HepG2 (cell line): ENCODE measurements at regions of chr20 and their contacts with region 1.

Region 1: DNA sequence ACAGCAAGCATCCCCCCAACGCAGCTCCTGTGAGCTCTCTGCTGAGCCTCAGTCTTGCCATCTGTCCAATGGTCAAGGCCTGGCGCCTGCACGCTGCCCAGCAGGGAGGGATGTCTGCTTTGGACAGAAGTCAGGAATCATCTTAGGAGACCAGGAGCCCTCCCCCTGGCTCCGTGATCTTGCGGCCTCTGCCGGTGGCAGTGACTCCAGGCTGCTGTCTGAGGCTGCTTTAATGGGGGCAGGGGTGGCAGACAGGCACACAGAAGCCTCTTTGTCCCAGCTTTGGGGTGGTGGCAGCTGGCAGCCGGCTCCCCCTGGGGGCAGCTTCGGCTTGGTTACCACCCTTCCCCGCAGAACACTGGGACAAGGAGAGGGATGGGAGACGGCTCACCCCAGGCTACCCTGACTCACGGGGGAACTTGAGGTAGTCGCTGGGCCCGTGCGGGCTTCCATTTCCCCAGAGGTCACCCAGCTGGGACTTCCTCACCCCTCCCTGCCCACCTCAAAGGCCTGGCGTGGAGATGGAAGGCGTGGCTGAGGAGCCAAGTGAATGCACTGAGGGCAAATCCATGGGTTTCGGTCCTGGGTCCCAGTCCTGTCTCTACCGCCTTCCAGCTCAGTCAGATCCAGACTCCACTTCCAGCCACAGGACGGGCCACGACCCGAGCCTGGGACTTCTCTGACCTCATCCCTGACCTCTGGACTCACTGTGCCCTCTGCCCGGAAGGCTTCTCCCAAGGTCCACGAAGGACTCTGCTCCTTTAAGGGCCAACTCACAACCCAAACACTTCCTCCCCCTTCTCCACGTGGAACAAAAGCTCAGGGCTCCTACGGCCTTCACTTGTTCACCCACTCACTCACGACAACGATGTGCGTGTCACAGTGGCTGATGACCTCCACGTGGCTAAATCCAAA is 14.8 kb downstream of the PEDS1 start:
- DNase-seq: peak; percentile 73
- ATAC-seq: peak; percentile 68
- H3K4me3 ChIP-seq: peak overlapping the region in 1 of 3 experiments; percentile 25; a peak in 1 of 6 replicates
- H3K27ac ChIP-seq: peak overlapping the region; percentile 33
- H3K4me1 ChIP-seq: peaks cover 40% of the 10 kb centered on the region
- H3K27me3 ChIP-seq: no peaks in the 10 kb centered on the region
- CTCF ChIP-seq: peak; percentile 64
- EP300 ChIP-seq: no peak
- POLR2A ChIP-seq: no peak
- RAD21 ChIP-seq: peak; percentile 66

Region 2: GRCh38 chr20:49078296-49078695 is 1060.4 kb before region 1 on chr20:
- CTCF ChIA-PET with region 1: no interaction called
- POLR2A ChIA-PET with region 1: no interaction called
- in situ Hi-C with region 1: no loop called
- intact Hi-C with region 1: no loop called
- DNase-seq: no peak
- ATAC-seq: no peak
- H3K4me3 ChIP-seq: no peak overlapping the region
- H3K27ac ChIP-seq: no peak overlapping the region
- H3K4me1 ChIP-seq: no peaks in the 10 kb centered on the region
- H3K27me3 ChIP-seq: no peaks in the 10 kb centered on the region
- CTCF ChIP-seq: no peak
- EP300 ChIP-seq: no peak
- POLR2A ChIP-seq: no peak
- RAD21 ChIP-seq: no peak

Region 3: DNA sequence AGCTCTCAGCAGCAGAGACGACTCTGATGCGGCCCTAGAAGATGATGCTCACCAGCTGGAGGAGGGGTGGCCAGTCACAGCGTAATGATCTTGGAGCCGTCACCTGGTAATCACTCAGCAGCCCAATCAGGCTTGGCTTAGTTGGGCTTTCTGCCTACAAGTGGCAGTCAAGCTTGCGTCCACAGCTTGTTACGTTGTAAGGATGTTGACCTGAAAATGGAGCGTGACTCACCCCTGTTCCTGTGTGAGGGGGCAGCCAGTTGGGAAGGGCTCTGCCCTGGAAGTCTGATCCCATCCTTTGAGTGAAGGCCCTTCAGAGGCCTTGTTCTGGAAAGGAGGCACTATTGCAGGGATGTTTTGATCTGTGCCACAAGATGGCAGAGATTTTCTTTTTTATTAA is 273.2 kb before region 1 on chr20:
- CTCF ChIA-PET with region 1: no interaction called
- POLR2A ChIA-PET with region 1: no interaction called
- in situ Hi-C with region 1: no loop called
- intact Hi-C with region 1: no loop called
- DNase-seq: no peak
- ATAC-seq: no peak
- H3K4me3 ChIP-seq: no peak overlapping the region
- H3K27ac ChIP-seq: no peak overlapping the region
- H3K4me1 ChIP-seq: no peaks in the 10 kb centered on the region
- H3K27me3 ChIP-seq: no peaks in the 10 kb centered on the region
- CTCF ChIP-seq: no peak
- EP300 ChIP-seq: no peak
- POLR2A ChIP-seq: no peak
- RAD21 ChIP-seq: no peak

Region 4: DNA sequence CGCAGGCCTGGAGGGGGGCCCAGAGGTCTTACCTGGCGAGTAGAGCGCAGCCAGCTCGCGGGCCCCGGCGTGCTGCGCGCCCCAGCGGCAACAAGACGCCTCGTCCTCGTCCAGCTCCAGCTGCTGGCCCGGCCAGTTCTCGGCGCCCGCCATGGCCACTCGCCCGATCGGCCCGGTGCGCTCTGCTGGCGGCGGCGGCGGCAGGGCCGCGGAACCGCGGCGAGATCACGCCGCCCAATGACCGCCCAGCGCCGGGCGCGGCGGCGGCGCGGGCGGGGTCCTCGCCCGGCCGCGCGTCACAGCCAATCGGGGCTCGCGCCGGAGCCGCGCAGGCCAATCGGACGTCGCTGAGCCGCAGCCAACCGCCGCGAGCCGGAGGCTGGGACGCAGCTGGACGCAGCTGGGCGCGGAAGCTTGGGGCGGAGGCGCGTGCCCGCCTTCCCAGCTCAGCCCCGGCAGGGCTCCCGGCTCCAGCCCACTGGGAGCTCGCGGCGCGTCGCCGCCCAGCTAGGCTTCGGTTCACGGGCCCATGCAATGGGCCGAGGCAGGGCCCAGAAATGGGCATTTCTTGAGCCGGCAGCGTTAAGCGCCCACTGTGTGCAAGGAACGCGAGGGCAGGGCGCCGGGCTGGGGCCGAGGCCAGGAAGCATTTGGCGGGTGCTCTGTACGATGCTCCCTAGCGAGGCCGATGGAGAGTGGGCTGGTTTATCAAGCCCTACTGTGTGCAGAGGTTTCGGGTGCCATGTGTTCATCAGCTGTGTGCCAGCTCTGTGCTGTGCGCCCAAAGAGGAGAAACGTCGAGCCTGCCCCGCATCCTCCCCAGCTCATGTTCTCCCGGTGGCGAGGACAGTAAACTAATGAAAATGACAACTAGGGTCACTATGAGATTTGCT is 15.0 kb after region 1 on chr20 and contains the start of gene PEDS1:
- CTCF ChIA-PET with region 1: no interaction called
- POLR2A ChIA-PET with region 1: interaction called, 39 read pairs
- in situ Hi-C with region 1: no loop called
- intact Hi-C with region 1: no loop called
- DNase-seq: peak; percentile 83
- ATAC-seq: peak; percentile 95
- H3K4me3 ChIP-seq: peak within 1 kb of the TSS; percentile 91 to 98 (median 96)
- H3K27ac ChIP-seq: peak within 1 kb of the TSS; percentile 73
- H3K4me1 ChIP-seq: peaks cover 72% of the 10 kb centered on the region
- H3K27me3 ChIP-seq: peaks cover 0 to 4% of the 10 kb centered on the region in 2 experiments; a peak in 1 of 5 replicates
- CTCF ChIP-seq: no peak
- EP300 ChIP-seq: 0 out of 4 replicates have a peak, but pooled peaks of 1 of the 2 experiments have one; percentile 18
- POLR2A ChIP-seq: peak; percentile 89 to 93
- RAD21 ChIP-seq: peak; percentile 64
- total RNA-seq, gene PEDS1: 21.4 and 30.5 TPM in 2 replicates